Activated CD4-positive, alpha-beta T cell treated with anti-CD3 and anti-CD28 coated beads, Interleukin-2, amount 10 ng/mL, durations not matched to agents 7 days and 5 days (primary cell): ENCODE measurements at regions of chr1 and their contacts with region 1.

Region 1: DNA sequence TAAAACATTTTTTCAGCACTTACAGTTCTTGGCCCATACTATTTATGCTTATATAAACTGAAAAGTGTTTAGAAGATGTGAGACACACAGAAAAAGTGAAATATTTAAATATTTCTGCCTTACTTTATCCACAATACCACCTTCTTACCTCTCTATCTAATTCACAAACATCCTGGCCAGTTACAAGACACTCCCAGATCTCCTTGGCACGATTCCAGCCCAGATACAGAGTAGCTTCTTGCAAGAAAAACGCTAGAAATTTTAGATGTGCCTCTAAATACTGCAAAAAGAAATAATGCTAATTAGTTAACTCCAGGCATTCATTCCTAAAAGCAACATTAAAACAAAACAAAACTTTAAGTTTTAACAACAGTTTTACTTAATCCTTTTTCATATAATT is 68.4 kb downstream of the USP24 start:
- DNase-seq: no peak
- H3K4me3 Mint-ChIP-seq: no peak overlapping the region
- H3K27ac Mint-ChIP-seq: no peak overlapping the region
- H3K4me1 Mint-ChIP-seq: peaks cover 14% of the 10 kb centered on the region
- H3K27me3 Mint-ChIP-seq: no peaks in the 10 kb centered on the region

Region 2: DNA sequence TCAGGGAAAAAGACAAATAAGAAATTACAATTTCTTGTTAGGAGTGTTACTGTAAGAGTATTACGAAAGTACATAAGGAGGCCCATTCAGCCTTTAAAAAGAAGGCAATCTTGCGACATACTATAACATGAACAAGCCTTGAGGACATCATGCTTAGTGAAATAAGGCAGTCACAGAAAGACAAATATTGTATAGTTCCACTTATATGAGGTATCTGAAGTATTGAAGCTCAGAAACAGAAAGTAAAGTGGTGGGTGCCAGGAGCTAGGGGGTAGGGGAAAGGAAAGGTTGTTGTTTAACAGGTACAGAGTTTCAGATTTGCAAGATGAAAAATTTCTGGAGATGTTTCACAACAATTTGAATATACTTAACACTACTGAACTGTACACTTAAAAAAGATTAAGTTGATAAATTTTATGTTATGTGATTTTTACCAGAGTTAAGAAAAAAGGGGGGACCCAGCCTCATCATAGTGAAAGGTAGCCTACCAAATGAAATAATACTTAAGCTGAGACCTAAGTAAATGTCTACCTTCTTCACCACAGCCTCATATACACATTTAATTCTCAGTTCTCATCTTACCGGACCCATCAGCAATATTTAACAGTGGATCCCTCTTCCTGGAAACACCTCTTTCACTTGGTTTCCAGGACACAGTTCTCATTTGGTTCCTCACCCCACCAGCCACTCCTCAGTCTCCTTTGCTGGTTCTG is 48.9 kb after region 1 on chr1:
- CTCF ChIA-PET with region 1: interaction called, 10 read pairs
- POLR2A ChIA-PET with region 1: no interaction called
- DNase-seq: no peak
- H3K4me3 Mint-ChIP-seq: no peak overlapping the region
- H3K27ac Mint-ChIP-seq: no peak overlapping the region
- H3K4me1 Mint-ChIP-seq: peaks cover 51% of the 10 kb centered on the region
- H3K27me3 Mint-ChIP-seq: no peaks in the 10 kb centered on the region